AG04449 (cell line): ENCODE measurements at regions of chr7 and their contacts with region 1.

Region 1: GRCh38 chr7:134480736-134481135 is 21.8 kb upstream of the AKR1B1 start:
- DNase-seq: no peak
- H3K4me3 ChIP-seq: no peak overlapping the region
- CTCF ChIP-seq: no peak

Region 2: DNA sequence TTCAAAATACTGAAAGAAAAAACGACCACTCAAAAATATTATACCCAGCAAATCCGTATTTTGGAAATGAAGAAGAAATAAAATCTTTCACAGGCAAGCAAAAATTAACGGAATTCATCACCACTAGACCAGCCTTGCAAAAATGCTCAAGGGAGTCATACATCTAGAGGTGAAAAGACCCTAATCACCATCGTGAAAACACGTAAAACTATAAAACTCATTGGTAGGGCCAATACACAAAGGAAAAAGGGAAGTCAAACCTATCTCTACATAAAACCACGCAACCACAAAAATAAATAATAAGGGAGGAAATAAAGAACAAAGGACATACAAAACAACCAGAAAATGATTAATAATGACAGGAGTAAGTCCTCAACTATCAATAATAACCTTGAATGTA is 15.2 kb before region 1 on chr7:
- CTCF ChIA-PET with region 1: interaction called, 64 read pairs
- POLR2A ChIA-PET with region 1: no interaction called
- DNase-seq: no peak
- H3K4me3 ChIP-seq: no peak overlapping the region
- CTCF ChIP-seq: no peak